Aorta (tissue), 5 donors: ENCODE measurements at regions of chr10 and their contacts with region 1.

Region 1: GRCh38 chr10:99620713-99621453 is 644 bp upstream of the SLC25A28 start:
- DNase-seq: peak; percentile 96 to 97
- ATAC-seq: peak; percentile 96
- H3K4me3 ChIP-seq: peak overlapping the region; percentile 31 to 40
- H3K27ac ChIP-seq: peak overlapping the region; percentile 74 to 94
- H3K4me1 ChIP-seq: no peaks in the 10 kb centered on the region
- H3K27me3 ChIP-seq: no peaks in the 10 kb centered on the region

Region 2: GRCh38 chr10:99430451-99431189 is 190.3 kb before region 1 on chr10 and contains the start of gene GOT1:
- intact Hi-C with region 1: loop called in 1 of 2 experiments (anchors 5 kb)
- DNase-seq: peak; percentile 96
- ATAC-seq: peak; percentile 98
- H3K4me3 ChIP-seq: peak within 1 kb of the TSS; percentile 80 to 89
- H3K27ac ChIP-seq: peak within 1 kb of the TSS in 1 of 2 donors; percentile 43
- H3K4me1 ChIP-seq: no peaks in the 10 kb centered on the region
- H3K27me3 ChIP-seq: no peaks in the 10 kb centered on the region
- total RNA-seq, gene GOT1: 9.4 to 13.7 TPM

Region 3: DNA sequence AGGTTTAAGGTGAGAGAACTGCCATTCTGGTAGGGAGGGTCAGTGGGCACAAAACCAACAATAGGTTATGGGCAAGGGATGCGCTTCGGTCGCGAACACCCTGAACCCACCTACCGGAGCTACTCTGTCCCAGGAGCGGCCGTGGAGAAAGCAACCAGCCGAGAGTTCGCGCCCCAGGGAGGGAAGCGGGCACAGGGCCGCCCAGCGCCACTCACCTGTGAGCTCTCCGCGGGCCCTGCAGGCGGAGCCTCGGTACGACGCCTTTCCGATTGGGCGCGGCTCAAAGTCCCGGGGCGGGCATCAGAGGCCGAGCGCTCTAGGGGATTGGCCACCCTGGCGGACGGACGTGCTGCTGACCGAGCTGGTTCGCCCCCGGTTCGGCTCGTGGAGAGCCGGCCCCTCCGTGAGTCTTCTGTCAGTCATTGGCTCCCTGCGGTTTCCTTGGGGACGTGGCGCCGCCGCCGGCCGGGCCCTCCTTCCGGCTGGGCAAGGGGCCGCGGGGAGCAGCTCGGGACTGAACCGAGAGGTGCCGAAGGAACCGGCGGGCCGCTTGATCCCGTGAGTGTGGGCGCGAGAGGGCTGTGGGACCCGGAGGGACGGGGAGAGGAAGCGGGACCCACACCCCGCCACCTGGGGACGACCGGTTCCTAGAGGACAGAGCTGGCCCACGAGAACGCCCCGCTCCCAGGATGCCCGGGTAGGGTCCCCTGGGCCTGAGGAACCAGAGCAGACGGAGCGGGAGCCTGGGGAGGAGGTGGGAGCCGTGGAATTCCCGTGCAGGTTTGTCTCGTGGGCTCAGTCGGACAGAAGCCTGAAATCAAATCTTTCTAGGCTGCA is 38.4 kb after region 1 on chr10 and contains the start of gene ENTPD7:
- intact Hi-C with region 1: loop called (anchors 1 to 5 kb)
- DNase-seq: peak; percentile 96 to 98
- ATAC-seq: peak; percentile 98
- H3K4me3 ChIP-seq: peak within 1 kb of the TSS; percentile 62 to 88
- H3K27ac ChIP-seq: no peak within 1 kb of the TSS
- H3K4me1 ChIP-seq: no peaks in the 10 kb centered on the region
- H3K27me3 ChIP-seq: no peaks in the 10 kb centered on the region
- total RNA-seq, gene ENTPD7: 8.2 to 8.6 TPM

Region 4: GRCh38 chr10:99672884-99673283 is 52.0 kb after region 1 on chr10:
- intact Hi-C with region 1: no loop called
- DNase-seq: no peak
- ATAC-seq: no peak
- H3K4me3 ChIP-seq: no peak overlapping the region
- H3K27ac ChIP-seq: no peak overlapping the region
- H3K4me1 ChIP-seq: no peaks in the 10 kb centered on the region
- H3K27me3 ChIP-seq: no peaks in the 10 kb centered on the region

Region 5: DNA sequence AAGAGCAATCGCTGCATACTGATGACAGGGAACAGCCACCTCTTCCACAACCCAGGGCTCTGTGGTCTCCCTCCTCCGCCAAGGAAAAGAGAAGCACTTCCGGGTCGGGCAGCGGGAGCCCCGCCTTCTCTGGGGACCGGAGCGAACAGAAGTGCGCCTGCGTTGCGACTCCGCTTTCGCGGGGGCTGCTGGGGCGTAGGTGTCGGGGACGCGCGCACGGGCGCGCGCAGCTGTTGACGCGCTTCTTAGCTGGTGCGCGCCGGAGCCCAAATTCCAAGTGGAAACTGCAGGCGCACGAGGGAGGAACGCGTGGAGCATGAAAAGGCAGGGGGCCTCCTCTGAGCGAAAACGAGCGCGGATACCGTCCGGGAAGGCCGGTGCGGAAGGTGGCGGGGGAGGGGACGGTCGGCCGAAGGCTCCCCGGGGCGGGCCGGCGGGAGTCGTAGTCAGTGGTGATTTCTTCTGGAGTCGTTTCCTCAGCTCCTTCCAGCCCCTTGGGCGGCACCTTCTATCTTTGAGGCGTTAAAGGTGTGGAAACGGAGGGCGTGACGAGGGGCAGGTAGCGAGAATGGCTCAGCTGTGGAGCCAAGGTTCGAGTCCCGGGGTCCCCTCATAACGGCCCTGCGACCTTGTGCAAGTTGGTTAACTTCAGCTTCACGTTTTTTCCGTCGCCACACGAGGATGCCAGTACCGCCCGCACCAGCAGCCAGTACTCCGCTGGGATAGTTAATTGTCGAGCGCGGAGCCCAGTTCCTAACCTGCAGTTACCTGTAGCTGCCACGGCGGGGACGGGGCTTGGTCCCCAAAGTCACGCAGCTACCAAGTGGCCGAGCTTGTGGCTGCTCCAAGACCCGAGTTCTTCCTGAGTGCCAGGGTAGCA is 111.4 kb after region 1 on chr10 and contains the starts of genes COX15 and CUTC:
- intact Hi-C with region 1: loop called (anchors 10 kb)
- DNase-seq: peak; percentile 98 to 99
- ATAC-seq: peak; percentile 99
- H3K4me3 ChIP-seq: peak within 1 kb of the TSS; percentile 50 to 97
- H3K27ac ChIP-seq: peak within 1 kb of the TSS; percentile 7 to 78
- H3K4me1 ChIP-seq: no peaks in the 10 kb centered on the region
- H3K27me3 ChIP-seq: no peaks in the 10 kb centered on the region
- total RNA-seq, gene COX15: 16.3 to 27.2 TPM
- total RNA-seq, gene CUTC: 16.5 to 22.4 TPM